ENCODE measurements at regions of chr4 and their contacts with region 1.

Region 1: GRCh38 chr4:139099366-139099982 is 77.5 kb downstream of the ELF2 start:
- DNase-seq: peak; percentile 80
- H3K4me3 Mint-ChIP-seq: no peak overlapping the region
- H3K27ac Mint-ChIP-seq: no peak overlapping the region
- H3K4me1 Mint-ChIP-seq: no peaks in the 10 kb centered on the region
- H3K27me3 Mint-ChIP-seq: no peaks in the 10 kb centered on the region

Region 2: DNA sequence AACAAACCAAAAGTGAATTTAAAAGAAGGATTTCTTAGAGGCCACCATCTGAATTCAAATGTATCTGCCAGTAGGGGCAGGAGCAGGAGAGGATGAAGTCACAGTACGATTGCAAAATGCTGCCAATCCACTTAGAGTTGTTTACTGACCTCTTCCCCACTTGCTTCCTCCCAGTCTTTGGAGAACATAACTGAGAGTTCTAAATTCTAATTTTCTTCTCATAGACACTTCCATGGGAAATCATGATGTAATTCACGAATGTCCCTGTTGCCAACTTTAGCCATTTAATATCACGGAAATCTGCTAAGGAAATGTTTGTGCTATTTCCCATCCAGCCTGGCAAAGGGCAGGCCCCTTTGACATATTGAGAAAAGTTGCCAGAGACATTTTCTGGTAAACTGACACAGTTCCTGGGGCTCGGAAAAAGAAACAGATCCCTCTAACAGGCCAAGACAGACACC is 117.5 kb before region 1 on chr4:
- CTCF ChIA-PET with region 1: no interaction called
- POLR2A ChIA-PET with region 1: no interaction called
- intact Hi-C with region 1: no loop called
- DNase-seq: no peak
- H3K4me3 Mint-ChIP-seq: no peak overlapping the region
- H3K27ac Mint-ChIP-seq: no peak overlapping the region
- H3K4me1 Mint-ChIP-seq: no peaks in the 10 kb centered on the region
- H3K27me3 Mint-ChIP-seq: peaks cover 1% of the 10 kb centered on the region

Region 3: DNA sequence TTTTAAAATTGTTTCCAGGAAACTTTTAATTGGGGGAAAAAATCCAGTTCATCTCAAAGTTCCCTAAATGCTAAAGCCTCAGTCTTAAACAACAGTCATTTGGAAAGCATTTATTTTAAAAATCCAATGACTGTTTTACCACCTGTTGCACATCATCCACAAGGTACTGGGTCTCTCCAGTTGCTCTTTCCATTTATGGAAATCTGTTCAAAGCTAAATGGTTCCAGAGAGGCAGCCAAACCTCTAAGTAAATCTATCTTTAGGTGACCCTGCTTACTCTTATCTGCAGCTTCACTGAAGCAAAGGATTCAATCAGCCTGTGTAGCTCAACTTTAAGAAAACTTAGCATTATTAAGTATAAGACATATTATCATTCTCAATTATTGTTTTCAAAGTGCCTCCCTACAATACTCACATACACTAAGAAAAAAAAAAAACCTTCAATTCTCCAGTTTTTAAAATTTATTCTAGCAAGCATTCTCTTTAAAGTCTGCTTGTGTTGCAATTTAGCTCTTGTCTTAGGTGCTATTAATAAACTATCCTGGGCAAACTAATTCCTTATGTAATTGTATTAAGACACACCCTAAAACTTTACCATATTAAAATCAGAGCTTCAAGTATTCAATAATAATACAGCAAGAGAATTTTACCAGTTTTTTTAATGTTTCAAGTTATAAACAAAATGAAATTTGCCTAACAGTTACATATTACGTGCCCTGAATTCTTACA is 23.3 kb before region 1 on chr4:
- CTCF ChIA-PET with region 1: no interaction called
- POLR2A ChIA-PET with region 1: no interaction called
- intact Hi-C with region 1: no loop called
- DNase-seq: no peak
- H3K4me3 Mint-ChIP-seq: no peak overlapping the region
- H3K27ac Mint-ChIP-seq: no peak overlapping the region
- H3K4me1 Mint-ChIP-seq: peaks cover 40% of the 10 kb centered on the region
- H3K27me3 Mint-ChIP-seq: no peaks in the 10 kb centered on the region

Region 4: GRCh38 chr4:139167774-139168444 is 68.4 kb after region 1 on chr4:
- CTCF ChIA-PET with region 1: interaction called, 11 read pairs
- POLR2A ChIA-PET with region 1: no interaction called
- intact Hi-C with region 1: no loop called
- DNase-seq: no peak
- H3K4me3 Mint-ChIP-seq: no peak overlapping the region
- H3K27ac Mint-ChIP-seq: no peak overlapping the region
- H3K4me1 Mint-ChIP-seq: peaks cover 17% of the 10 kb centered on the region
- H3K27me3 Mint-ChIP-seq: no peaks in the 10 kb centered on the region

Region 5: DNA sequence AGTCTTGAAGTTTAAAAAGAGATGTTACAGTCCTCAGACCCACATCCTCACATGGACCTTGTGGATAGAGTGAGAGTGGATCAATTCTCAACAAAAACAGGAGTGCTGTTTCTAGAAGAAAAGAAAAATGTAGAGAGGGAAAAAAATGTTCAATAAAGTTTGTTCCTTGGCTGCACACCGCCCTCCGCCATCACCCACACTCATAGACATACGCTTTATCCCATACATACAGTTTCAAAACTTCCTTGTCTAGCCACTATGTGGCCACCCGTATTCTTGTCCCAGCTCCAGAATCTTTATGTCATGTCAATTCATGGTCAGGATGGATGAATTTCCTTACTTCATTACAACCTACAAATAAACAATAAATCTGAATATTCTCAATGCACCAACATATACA is 101.0 kb after region 1 on chr4:
- CTCF ChIA-PET with region 1: no interaction called
- POLR2A ChIA-PET with region 1: no interaction called
- intact Hi-C with region 1: no loop called
- DNase-seq: no peak
- H3K4me3 Mint-ChIP-seq: no peak overlapping the region
- H3K27ac Mint-ChIP-seq: no peak overlapping the region
- H3K4me1 Mint-ChIP-seq: no peaks in the 10 kb centered on the region
- H3K27me3 Mint-ChIP-seq: peaks cover 4% of the 10 kb centered on the region

Region 6: DNA sequence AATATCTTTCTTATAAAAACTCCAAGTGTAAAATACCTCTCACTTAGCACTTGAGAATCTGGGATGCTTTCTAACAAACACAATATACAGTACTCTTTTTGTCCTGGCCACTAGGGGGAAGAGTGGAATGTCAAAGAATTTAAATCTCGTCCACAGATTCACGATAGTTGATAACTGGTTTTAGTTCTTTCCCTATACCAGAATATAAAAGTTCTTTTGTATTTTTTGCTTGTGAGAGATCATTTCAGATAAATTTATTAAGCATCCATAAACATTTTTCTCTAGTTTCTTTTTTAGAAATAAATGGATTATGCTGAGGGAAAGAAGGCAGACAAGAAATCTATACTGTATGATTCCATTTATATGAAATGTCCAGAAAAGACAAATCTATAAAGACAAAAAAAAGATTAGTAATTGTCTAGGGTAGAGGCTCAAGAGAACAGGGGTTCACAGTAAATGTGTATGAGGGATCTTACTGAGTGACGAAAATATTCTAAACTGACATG is 130.1 kb after region 1 on chr4:
- CTCF ChIA-PET with region 1: interaction called, 4 read pairs
- POLR2A ChIA-PET with region 1: no interaction called
- intact Hi-C with region 1: loop called (anchors 1 kb)
- DNase-seq: no peak
- H3K4me3 Mint-ChIP-seq: no peak overlapping the region
- H3K27ac Mint-ChIP-seq: no peak overlapping the region
- H3K4me1 Mint-ChIP-seq: no peaks in the 10 kb centered on the region
- H3K27me3 Mint-ChIP-seq: no peaks in the 10 kb centered on the region

Region 7: DNA sequence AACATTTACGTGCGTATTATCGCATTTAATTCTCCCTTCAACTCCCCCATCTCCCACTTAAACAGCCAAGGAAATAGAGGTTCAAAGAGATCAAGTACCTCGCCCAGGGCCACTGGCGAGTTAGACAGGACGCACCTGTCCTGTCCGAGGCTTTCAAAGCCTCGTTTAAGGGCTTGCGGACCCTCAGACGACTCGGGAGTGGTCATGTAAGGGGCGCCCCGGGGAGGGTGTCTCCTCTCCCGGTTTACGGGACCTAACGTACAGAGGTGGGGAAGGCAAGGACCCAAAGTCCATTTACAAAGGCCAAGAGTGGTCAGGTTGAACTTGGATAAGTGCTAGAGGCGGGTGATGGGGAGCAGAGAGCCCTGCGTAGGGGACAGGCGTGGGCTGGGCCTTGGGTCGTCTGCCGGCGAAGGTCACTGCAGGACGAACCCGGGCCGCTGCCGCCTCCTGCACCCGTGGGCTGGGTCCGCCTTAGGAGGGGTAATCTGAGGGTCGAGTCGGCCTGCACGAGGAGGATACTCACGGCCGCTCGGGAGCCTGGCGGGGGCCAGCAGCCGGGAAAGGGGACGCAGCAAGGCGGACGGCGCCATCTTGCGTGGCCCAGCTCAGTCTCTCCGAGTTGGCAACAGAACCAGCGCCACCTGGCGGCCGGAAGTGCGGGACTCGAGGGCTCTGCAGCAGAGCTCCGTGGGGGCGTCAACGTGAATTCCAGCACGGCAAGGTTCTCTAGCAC is 195.9 kb after region 1 on chr4:
- CTCF ChIA-PET with region 1: interaction called, 40 read pairs
- POLR2A ChIA-PET with region 1: no interaction called
- intact Hi-C with region 1: loop called (anchors 1 kb)
- DNase-seq: peak; percentile 97
- H3K4me3 Mint-ChIP-seq: peak overlapping the region; percentile 93
- H3K27ac Mint-ChIP-seq: peak overlapping the region; percentile 94
- H3K4me1 Mint-ChIP-seq: peaks cover 29% of the 10 kb centered on the region
- H3K27me3 Mint-ChIP-seq: no peaks in the 10 kb centered on the region

Region 8: GRCh38 chr4:139410312-139410711 is 310.8 kb after region 1 on chr4:
- CTCF ChIA-PET with region 1: no interaction called
- POLR2A ChIA-PET with region 1: no interaction called
- intact Hi-C with region 1: no loop called
- DNase-seq: no peak
- H3K4me3 Mint-ChIP-seq: no peak overlapping the region
- H3K27ac Mint-ChIP-seq: no peak overlapping the region
- H3K4me1 Mint-ChIP-seq: no peaks in the 10 kb centered on the region
- H3K27me3 Mint-ChIP-seq: no peaks in the 10 kb centered on the region

Region 9: GRCh38 chr4:139530833-139531427 is 431.5 kb after region 1 on chr4:
- CTCF ChIA-PET with region 1: no interaction called
- POLR2A ChIA-PET with region 1: no interaction called
- intact Hi-C with region 1: loop called (anchors 10 kb)
- DNase-seq: peak; percentile 61
- H3K4me3 Mint-ChIP-seq: no peak overlapping the region
- H3K27ac Mint-ChIP-seq: no peak overlapping the region
- H3K4me1 Mint-ChIP-seq: peaks cover under 1% of the 10 kb centered on the region
- H3K27me3 Mint-ChIP-seq: no peaks in the 10 kb centered on the region